ENCODE measurements at regions of chr7 and their contacts with region 1.

Region 1: DNA sequence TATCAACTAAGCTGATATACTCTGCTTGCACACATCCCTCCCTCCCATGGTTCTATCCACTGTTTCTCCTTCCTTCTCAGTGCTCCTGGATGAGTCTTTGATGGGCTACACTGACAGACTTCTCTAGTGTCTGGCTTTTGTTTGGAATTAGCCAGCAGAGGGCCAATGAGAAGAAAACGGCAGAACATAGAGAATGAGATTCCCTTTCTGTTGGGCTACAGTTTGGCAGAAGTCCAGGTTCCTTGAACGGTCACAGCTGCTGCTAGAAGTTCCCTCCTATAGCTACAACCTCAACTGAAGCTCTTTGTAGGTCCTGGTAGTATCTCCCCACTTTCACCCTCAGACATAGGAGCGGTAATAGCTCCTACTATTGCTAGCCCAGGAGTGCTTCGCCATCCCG is 251.1 kb upstream of the LRRN3 start:
- DNase-seq: peak; percentile 33
- ATAC-seq: peak; percentile 75
- H3K4me3 ChIP-seq: no peak overlapping the region
- H3K27ac ChIP-seq: no peak overlapping the region
- H3K4me1 ChIP-seq: peaks cover 13% of the 10 kb centered on the region
- H3K27me3 ChIP-seq: no peaks in the 10 kb centered on the region
- CTCF ChIP-seq: no peak
- EP300 ChIP-seq: no peak
- POLR2A ChIP-seq: no peak
- RAD21 ChIP-seq: no peak

Region 2: DNA sequence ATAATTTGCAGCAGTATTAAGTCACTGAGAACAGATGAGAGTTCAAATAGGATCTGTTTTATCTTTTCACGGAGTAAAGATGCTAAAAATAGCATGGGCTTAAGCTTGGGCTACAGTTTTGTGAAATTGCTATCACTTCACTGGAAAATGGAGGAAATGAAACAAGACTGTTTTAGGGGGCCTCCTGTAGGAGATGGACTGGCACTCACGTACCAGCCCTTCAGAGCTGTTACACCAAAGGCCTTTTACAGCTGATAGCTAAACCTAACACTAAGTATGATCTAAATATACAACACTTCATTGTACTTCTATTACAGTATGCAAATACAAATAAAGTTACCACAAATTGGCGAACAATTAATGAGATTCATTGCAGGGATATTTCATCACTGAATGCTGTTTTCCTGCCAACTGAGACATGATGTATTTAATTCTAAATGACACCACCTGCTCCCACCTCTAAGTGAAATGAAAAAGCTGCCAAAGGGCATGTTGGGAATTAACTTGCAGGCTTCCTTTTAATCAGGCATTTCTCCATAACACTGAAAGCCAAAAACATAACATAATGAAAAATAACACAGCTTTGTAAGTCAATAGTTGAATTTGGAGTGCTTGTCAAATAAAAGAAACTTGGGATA is 53.4 kb before region 1 on chr7:
- CTCF ChIA-PET with region 1: no interaction called
- POLR2A ChIA-PET with region 1: no interaction called
- in situ Hi-C with region 1: no loop called
- intact Hi-C with region 1: loop called (anchors 1 kb)
- DNase-seq: no peak
- ATAC-seq: no peak
- H3K4me3 ChIP-seq: no peak overlapping the region
- H3K27ac ChIP-seq: no peak overlapping the region
- H3K4me1 ChIP-seq: no peaks in the 10 kb centered on the region
- H3K27me3 ChIP-seq: no peaks in the 10 kb centered on the region
- CTCF ChIP-seq: no peak
- EP300 ChIP-seq: no peak
- POLR2A ChIP-seq: no peak
- RAD21 ChIP-seq: no peak

Region 3: DNA sequence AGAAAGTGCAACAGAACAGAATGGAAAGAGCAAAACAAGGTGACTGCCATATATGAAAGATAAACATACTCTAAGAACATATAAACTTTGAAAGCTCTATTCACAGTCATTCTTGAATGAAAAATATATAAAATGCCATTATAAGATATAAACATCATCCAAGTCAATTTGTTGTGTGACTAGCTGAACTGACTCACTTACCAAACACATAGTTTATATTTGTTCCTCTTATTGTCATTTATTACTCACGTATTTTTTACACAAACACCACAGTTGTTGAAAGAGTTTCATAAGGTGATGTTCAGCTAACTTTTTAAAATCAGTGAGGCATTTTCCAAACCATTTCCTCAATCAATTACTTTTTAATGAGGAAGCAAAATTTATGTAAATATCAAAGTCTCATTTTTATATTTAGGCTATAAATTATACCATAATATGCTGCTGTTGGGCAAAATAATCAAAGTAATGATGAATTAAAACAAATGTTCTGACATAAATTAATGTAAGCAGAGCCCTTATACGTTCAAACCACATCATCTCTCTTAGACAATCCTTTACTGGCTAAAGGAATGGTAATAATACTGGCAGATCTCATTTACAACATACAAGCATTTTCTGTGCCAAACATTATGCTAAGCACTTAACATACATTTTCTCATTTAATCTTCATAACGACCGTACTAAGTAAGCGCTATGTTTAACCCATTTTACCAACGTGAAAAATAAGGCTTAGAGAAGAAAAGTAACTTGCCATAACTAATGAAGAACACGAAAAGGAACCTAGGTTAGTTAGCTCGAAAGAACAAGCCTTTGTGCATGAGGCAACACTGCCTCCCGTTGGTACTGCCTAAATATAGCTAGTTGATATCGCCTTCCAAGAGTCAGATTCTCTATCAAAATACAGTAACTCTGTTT is 258.4 kb after region 1 on chr7:
- CTCF ChIA-PET with region 1: no interaction called
- POLR2A ChIA-PET with region 1: no interaction called
- in situ Hi-C with region 1: no loop called
- intact Hi-C with region 1: loop called (anchors 10 kb)
- DNase-seq: peak; percentile 20
- ATAC-seq: peak; percentile 68
- H3K4me3 ChIP-seq: no peak overlapping the region
- H3K27ac ChIP-seq: no peak overlapping the region
- H3K4me1 ChIP-seq: no peaks in the 10 kb centered on the region
- H3K27me3 ChIP-seq: no peaks in the 10 kb centered on the region
- CTCF ChIP-seq: peak; percentile 77
- EP300 ChIP-seq: no peak
- POLR2A ChIP-seq: no peak
- RAD21 ChIP-seq: peak; percentile 33; the same call in 1 of the 2 replicates